ENCODE measurements at regions of chr22 and their contacts with region 1.

Region 1: DNA sequence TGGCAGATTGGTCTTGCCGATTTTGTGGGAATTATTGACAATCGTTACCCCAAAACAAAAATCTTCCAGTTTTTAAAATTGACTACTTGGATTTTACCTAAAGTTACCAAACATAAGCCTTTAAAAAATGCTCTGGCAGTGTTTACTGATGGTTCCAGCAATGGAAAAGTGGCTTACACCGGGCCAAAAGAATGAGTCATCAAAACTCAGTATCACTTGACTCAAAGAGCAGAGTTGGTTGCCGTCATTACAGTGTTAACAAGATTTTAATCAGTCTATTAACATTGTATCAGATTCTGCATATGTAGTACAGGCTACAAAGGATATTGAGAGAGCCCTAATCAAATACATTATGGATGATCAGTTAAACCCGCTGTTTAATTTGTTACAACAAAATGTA is 37.2 kb downstream of the IGLL1 start:
- DNase-seq: no peak

Region 2: DNA sequence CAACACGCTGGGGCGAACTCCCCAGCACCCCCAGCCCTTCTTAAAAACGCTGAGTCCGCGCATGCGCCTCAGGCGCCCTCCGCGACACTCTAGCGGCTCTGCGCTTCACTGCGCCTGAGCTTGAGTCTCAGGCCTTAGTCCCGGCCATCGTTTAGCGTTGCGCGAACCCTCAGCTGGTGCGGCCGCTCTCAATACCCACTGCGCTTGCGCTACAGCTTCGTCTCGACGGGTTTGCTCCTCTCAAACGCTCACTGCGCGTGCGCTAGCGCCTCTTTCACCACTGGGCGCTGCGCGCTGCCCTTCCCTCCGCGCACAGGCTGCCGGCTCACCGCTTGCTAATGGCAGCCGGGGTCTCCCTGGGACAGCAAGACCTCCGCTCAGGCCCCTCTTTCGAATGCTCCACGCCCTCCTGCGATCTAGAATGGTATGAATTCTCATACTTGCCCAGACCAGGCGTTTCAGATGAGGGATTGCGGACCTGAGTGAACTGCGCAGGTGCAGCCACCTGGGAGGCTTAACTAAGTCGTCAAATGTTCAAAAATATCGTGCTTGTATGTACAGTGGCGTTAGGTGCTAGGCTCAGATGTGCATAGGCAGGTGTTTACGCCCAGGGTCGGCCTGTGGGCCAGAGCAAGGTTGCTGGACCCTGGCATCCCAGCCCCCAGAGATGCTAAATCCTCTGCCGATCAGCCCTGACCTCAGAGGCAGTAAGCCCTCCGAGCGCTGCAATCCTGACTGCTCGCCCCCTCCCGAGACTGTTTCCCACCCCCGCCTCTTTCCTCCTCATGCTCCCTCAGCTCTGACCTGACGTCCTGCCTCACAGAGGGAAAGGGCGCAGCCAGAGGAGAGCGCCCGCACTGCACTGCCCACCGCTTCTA is 314.9 kb after region 1 on chr22 and contains the start of gene SLC2A11:
- intact Hi-C with region 1: loop called in 1 of 2 experiments (anchors 10 kb)
- DNase-seq: peak; percentile 99
- total RNA-seq, gene SLC2A11: 4.9 to 7.4 TPM

Measured in posterior vena cava (tissue), 2 donors.